CD4-positive, alpha-beta T cell (primary cell): ENCODE measurements at regions of chr1 and their contacts with region 1.

Region 1: DNA sequence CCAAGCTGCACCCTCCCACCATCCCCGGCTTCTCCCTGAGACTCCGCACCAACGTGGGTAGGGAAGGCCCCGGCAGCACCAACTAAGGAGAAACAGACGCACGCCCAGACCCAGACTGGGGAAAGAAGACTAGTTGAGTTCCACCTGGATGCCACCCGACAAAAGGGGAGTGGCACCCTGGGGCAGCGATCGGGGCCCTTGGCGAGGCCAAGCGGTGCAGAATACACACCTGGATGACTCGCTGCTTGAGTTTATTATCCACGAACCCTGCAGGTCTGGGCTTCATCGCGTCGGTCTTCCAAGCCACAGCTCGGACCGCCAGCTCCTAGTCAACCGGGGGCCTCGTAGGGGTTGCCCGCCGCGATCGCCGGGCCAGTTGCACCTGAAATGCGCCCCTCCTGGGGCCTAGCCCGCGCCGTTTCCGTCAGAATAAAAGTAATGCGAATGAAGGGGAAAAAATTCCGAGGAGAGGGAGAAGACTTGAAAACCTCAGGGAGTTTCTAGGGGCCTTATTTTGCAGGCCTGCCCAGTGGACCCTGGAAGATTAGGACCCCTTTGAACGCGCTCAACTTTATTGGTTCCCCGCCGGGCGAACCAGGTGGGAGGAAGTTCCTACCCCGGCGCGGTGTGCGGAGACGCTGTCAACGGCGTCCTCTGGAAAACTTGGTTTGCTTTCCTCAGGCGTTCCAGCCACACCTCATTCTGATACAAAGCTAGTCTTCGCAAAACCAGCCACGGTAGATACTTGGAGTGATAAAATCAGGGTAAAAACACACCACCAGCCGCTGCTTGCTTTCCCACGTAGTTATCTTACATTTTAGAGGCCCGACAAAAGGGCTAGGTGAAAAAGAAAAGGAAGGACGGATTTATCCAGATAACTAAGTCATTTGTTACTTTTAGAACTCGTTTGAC is at the start of gene NVL:
- DNase-seq: peak; percentile 66 to 91 (median 74)
- ATAC-seq: peak; percentile 92
- H3K4me3 ChIP-seq: peak within 1 kb of the TSS; percentile 70
- H3K4me3 Mint-ChIP-seq: peak within 1 kb of the TSS; percentile 90
- H3K27ac ChIP-seq: peak within 1 kb of the TSS; percentile 78 to 87
- H3K27ac Mint-ChIP-seq: peak within 1 kb of the TSS; percentile 92
- H3K4me1 ChIP-seq: peaks cover 21% of the 10 kb centered on the region
- H3K4me1 Mint-ChIP-seq: peaks cover 39% of the 10 kb centered on the region
- H3K27me3 ChIP-seq: no peaks in the 10 kb centered on the region
- H3K27me3 Mint-ChIP-seq: no peaks in the 10 kb centered on the region
- CTCF ChIP-seq: no peak
- total RNA-seq, gene NVL: 14.9 to 18.5 TPM

Region 2: DNA sequence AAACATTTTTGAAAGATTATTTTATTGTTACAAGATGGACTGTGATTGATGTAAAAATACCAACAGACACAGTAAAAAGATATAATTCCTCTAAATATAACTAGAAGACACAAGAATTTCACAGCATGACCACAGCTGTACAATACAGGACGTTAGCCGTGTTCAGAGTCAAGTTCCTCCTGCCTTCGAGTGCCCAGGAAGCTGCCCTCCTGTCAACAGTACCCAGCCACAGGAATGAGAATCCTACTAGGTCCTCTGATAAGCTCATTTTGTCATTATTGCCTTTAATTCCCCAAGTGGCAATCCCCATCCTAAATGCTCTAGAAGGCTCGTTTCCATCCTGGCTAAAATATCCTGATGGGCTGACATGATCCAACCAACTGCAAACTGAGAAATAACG is 634.2 kb before region 1 on chr1:
- CTCF ChIA-PET with region 1: no interaction called
- POLR2A ChIA-PET with region 1: no interaction called
- intact Hi-C with region 1: loop called (anchors 2 to 5 kb)
- DNase-seq: no peak
- ATAC-seq: no peak
- H3K4me3 ChIP-seq: no peak overlapping the region
- H3K4me3 Mint-ChIP-seq: no peak overlapping the region
- H3K27ac ChIP-seq: no peak overlapping the region
- H3K27ac Mint-ChIP-seq: no peak overlapping the region
- H3K4me1 ChIP-seq: peaks cover 8% of the 10 kb centered on the region
- H3K4me1 Mint-ChIP-seq: peaks cover 8% of the 10 kb centered on the region
- H3K27me3 ChIP-seq: no peaks in the 10 kb centered on the region
- H3K27me3 Mint-ChIP-seq: no peaks in the 10 kb centered on the region
- CTCF ChIP-seq: no peak

Region 3: GRCh38 chr1:223811634-223812415 is 518.3 kb before region 1 on chr1:
- CTCF ChIA-PET with region 1: no interaction called
- POLR2A ChIA-PET with region 1: no interaction called
- intact Hi-C with region 1: loop called in 1 of 2 experiments (anchors 10 kb)
- DNase-seq: peak in 3 of 14 experiments; percentile 58 to 65 (median 64)
- ATAC-seq: peak; percentile 71
- H3K4me3 ChIP-seq: no peak overlapping the region
- H3K4me3 Mint-ChIP-seq: no peak overlapping the region
- H3K27ac ChIP-seq: no peak overlapping the region
- H3K27ac Mint-ChIP-seq: peak overlapping the region; percentile 35
- H3K4me1 ChIP-seq: peaks cover 15% of the 10 kb centered on the region
- H3K4me1 Mint-ChIP-seq: peaks cover 38% of the 10 kb centered on the region
- H3K27me3 ChIP-seq: no peaks in the 10 kb centered on the region
- H3K27me3 Mint-ChIP-seq: no peaks in the 10 kb centered on the region
- CTCF ChIP-seq: peak; percentile 73

Region 4: GRCh38 chr1:224067621-224068457 is 262.3 kb before region 1 on chr1:
- CTCF ChIA-PET with region 1: no interaction called
- POLR2A ChIA-PET with region 1: no interaction called
- intact Hi-C with region 1: no loop called
- DNase-seq: no peak
- ATAC-seq: no peak
- H3K4me3 ChIP-seq: no peak overlapping the region
- H3K4me3 Mint-ChIP-seq: no peak overlapping the region
- H3K27ac ChIP-seq: no peak overlapping the region
- H3K27ac Mint-ChIP-seq: no peak overlapping the region
- H3K4me1 ChIP-seq: peaks cover 5% of the 10 kb centered on the region
- H3K4me1 Mint-ChIP-seq: no peaks in the 10 kb centered on the region
- H3K27me3 ChIP-seq: no peaks in the 10 kb centered on the region
- H3K27me3 Mint-ChIP-seq: peaks cover 14% of the 10 kb centered on the region
- CTCF ChIP-seq: no peak

Region 5: DNA sequence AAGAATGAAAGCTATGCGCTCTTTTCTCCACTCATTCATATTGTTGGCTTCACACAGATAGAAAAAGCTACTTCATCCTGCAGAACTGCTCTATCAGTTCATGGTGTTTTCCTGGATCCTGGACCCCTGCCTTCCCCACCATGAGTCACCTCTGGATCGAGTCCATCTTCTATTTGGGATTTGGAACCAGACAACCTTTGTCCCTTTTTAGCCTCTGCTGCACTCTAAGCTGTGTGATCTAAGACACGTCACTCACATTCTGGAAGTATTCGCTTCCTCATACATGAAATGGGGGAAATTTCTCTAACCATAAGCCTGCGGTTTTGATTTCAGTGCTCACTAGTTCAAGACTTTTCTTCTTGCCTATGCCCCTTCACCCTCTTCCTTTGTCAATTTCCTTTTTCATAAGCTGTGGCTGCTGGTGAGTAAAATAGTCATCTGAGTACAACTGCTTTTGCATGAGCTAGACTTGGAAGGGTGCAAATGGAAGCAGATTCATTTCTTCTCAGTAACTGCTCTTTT is 161.2 kb before region 1 on chr1:
- CTCF ChIA-PET with region 1: interaction called, 5 read pairs
- POLR2A ChIA-PET with region 1: no interaction called
- intact Hi-C with region 1: loop called (anchors 1 to 2 kb)
- DNase-seq: peak in 5 of 14 experiments; percentile 17 to 86 (median 77)
- ATAC-seq: peak; percentile 91
- H3K4me3 ChIP-seq: no peak overlapping the region
- H3K4me3 Mint-ChIP-seq: peak overlapping the region; percentile 36
- H3K27ac ChIP-seq: no peak overlapping the region
- H3K27ac Mint-ChIP-seq: peak overlapping the region; percentile 21
- H3K4me1 ChIP-seq: peaks cover 28% of the 10 kb centered on the region
- H3K4me1 Mint-ChIP-seq: peaks cover 32% of the 10 kb centered on the region
- H3K27me3 ChIP-seq: no peaks in the 10 kb centered on the region
- H3K27me3 Mint-ChIP-seq: no peaks in the 10 kb centered on the region
- CTCF ChIP-seq: no peak

Region 6: DNA sequence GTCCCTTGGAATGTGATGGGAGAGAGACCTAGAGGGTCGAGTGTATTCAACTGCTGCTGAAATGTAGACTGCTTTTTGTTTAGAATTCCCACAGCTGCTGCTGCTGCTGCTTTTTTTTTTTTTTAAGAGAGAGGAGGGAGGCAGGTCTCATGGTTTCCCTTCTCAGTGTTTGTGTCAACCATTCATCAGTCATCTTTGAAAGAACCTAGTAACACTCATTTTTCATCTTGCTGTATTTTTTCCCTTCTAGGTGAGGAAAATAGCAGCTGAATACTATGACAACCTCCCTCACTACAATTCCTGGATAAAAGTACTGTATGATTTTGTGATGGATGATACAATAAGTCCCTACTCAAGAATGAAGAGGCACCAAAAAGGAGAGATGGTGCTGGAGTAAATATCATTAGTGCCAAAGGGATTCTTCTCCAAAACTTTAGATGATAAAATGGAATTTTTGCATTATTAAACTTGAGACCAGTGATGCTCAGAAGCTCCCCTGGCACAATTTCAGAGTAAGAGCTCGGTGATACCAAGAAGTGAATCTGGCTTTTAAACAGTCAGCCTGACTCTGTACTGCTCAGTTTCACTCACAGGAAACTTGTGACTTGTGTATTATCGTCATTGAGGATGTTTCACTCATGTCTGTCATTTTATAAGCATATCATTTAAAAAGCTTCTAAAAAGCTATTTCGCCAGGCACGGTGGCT is 137.9 kb before region 1 on chr1:
- CTCF ChIA-PET with region 1: no interaction called
- POLR2A ChIA-PET with region 1: no interaction called
- intact Hi-C with region 1: loop called in 1 of 2 experiments (anchors 5 kb)
- DNase-seq: no peak
- ATAC-seq: no peak
- H3K4me3 ChIP-seq: no peak overlapping the region
- H3K4me3 Mint-ChIP-seq: no peak overlapping the region
- H3K27ac ChIP-seq: no peak overlapping the region
- H3K27ac Mint-ChIP-seq: no peak overlapping the region
- H3K4me1 ChIP-seq: peaks cover 7% of the 10 kb centered on the region
- H3K4me1 Mint-ChIP-seq: peaks cover 27% of the 10 kb centered on the region
- H3K27me3 ChIP-seq: no peaks in the 10 kb centered on the region
- H3K27me3 Mint-ChIP-seq: no peaks in the 10 kb centered on the region
- CTCF ChIP-seq: no peak

Region 7: DNA sequence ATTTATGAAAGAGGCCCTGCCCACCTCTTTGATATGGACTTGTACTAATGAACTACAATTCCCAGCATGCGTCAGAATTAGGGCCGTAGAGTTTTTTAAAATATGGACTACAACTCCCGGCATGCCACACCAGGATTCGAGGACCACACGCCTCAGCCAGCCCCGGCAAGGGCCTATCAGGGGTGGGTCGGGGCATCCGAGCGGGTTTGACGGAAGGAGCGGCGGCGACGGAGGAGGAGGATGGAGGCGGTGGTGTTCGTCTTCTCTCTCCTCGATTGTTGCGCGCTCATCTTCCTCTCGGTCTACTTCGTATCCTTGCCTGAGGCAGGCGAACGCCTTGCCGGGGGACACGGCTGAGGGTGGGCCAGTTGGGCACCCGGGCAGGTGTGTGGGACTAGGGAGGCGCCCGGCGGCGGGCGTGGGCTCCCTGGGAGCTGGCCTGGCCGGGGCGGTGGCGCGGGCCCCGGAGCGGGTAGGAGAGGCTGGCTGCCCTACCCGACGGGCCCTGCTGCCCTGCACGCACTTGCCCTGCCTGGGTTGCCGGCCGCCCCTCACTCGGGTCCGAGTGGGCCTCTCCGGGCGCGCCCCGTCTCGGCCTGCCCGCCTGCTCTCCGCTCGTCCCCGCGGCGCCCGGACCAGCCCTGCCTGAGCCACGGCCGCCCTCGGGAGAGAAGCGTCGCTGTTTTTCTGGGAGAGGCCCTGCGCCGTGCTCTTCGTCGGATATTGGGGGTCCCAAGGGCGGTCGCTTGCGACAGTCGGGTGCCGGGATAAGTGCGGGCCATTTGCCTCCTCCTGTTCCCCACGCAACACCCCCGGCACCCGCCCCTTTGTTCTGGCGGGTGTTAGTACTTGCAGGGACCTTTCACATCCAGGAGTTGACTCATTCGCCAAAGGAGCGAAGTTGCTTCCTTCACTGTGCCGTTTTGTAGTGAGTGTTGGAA is 26.9 kb after region 1 on chr1 and contains the start of gene CNIH4:
- CTCF ChIA-PET with region 1: interaction called, 3 read pairs
- POLR2A ChIA-PET with region 1: interaction called, 7 read pairs
- intact Hi-C with region 1: loop called in 1 of 2 experiments (anchors 2 kb)
- DNase-seq: peak; percentile 83 to 97 (median 88)
- ATAC-seq: peak; percentile 99
- H3K4me3 ChIP-seq: peak within 1 kb of the TSS; percentile 80
- H3K4me3 Mint-ChIP-seq: peak within 1 kb of the TSS; percentile 99
- H3K27ac ChIP-seq: peak within 1 kb of the TSS; percentile 56 to 72
- H3K27ac Mint-ChIP-seq: peak within 1 kb of the TSS; percentile 80
- H3K4me1 ChIP-seq: peaks cover 40% of the 10 kb centered on the region
- H3K4me1 Mint-ChIP-seq: peaks cover 45% of the 10 kb centered on the region
- H3K27me3 ChIP-seq: no peaks in the 10 kb centered on the region
- H3K27me3 Mint-ChIP-seq: no peaks in the 10 kb centered on the region
- CTCF ChIP-seq: no peak
- total RNA-seq, gene CNIH4: 31.2 to 33.6 TPM